ENCODE measurements at regions of chr9 and their contacts with region 1.

Region 1: GRCh38 chr9:88722753-88723152 is 187.8 kb downstream of the NXNL2 start:
- DNase-seq: peak; percentile 37
- H3K4me3 ChIP-seq: no peak overlapping the region
- H3K27ac ChIP-seq: no peak overlapping the region
- H3K4me1 ChIP-seq: no peaks in the 10 kb centered on the region
- H3K27me3 ChIP-seq: no peaks in the 10 kb centered on the region
- CTCF ChIP-seq: peak; percentile 33 to 70

Region 2: DNA sequence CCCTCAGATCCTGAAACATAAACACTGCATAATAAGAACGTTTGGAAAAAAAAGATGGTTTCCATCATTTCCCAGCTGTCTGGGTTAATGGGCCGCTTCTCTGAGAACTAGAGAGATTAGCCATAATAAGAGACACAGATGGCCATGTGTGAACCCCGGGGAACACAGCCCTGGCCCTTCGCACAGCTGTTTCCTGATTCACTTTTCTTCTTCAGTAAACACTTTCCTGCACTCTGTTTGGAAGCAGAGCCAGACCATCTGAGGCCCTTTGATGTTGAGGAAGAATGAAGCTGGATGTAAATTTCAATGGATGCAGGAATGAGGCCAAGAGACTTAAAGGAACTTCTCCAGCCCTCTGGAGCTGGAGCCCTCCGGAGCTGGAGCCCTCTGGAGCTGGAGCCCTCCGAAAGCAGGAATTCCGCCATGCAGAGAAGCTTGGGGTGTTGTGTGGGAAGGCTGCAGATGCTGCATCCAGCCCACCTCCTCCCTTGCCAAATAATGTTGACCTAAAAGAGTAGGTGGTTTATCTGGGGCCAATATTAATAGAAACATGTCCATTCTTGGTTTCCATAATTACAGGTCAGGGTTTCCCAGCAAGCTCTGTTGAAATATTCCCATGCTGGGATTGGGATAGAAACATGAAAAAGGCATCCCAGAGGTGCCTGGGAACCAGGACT is 31.1 kb after region 1 on chr9:
- CTCF ChIA-PET with region 1: no interaction called
- dilution Hi-C with region 1: no loop called
- in situ Hi-C with region 1: no loop called
- intact Hi-C with region 1: no loop called
- DNase-seq: no peak
- H3K4me3 ChIP-seq: no peak overlapping the region
- H3K27ac ChIP-seq: no peak overlapping the region
- H3K4me1 ChIP-seq: peaks cover 5% of the 10 kb centered on the region
- H3K27me3 ChIP-seq: no peaks in the 10 kb centered on the region
- CTCF ChIP-seq: no peak

Region 3: GRCh38 chr9:88775037-88775471 is 52.3 kb after region 1 on chr9:
- CTCF ChIA-PET with region 1: no interaction called
- dilution Hi-C with region 1: no loop called
- in situ Hi-C with region 1: no loop called
- intact Hi-C with region 1: no loop called
- DNase-seq: peak; percentile 82
- H3K4me3 ChIP-seq: no peak overlapping the region
- H3K27ac ChIP-seq: peak overlapping the region; percentile 83
- H3K4me1 ChIP-seq: peaks cover 45% of the 10 kb centered on the region
- H3K27me3 ChIP-seq: no peaks in the 10 kb centered on the region
- CTCF ChIP-seq: no peak

Region 4: GRCh38 chr9:88920650-88921049 is 197.9 kb after region 1 on chr9:
- CTCF ChIA-PET with region 1: interaction called, 3 read pairs
- dilution Hi-C with region 1: no loop called
- in situ Hi-C with region 1: no loop called
- intact Hi-C with region 1: loop called (anchors 1 kb)
- DNase-seq: no peak
- H3K4me3 ChIP-seq: no peak overlapping the region
- H3K27ac ChIP-seq: no peak overlapping the region
- H3K4me1 ChIP-seq: no peaks in the 10 kb centered on the region
- H3K27me3 ChIP-seq: no peaks in the 10 kb centered on the region
- CTCF ChIP-seq: peak; percentile 22 to 39

Region 5: GRCh38 chr9:88991066-88992034 is 268.6 kb after region 1 on chr9 and contains the start of gene S1PR3:
- CTCF ChIA-PET with region 1: no interaction called
- dilution Hi-C with region 1: no loop called
- in situ Hi-C with region 1: loop called in 1 of 2 experiments (anchors 10 kb)
- intact Hi-C with region 1: no loop called
- DNase-seq: peak; percentile 51
- H3K4me3 ChIP-seq: peak within 1 kb of the TSS; percentile 56 to 75 (median 67)
- H3K27ac ChIP-seq: no peak within 1 kb of the TSS
- H3K4me1 ChIP-seq: peaks cover 16% of the 10 kb centered on the region
- H3K27me3 ChIP-seq: no peaks in the 10 kb centered on the region
- CTCF ChIP-seq: peak in 1 of 2 donors; percentile 30
- total RNA-seq, gene S1PR3: 2.5 to 6.0 TPM